Endothelial cell of umbilical vein (primary cell): ENCODE measurements at regions of chr2 and their contacts with region 1.

Region 1: DNA sequence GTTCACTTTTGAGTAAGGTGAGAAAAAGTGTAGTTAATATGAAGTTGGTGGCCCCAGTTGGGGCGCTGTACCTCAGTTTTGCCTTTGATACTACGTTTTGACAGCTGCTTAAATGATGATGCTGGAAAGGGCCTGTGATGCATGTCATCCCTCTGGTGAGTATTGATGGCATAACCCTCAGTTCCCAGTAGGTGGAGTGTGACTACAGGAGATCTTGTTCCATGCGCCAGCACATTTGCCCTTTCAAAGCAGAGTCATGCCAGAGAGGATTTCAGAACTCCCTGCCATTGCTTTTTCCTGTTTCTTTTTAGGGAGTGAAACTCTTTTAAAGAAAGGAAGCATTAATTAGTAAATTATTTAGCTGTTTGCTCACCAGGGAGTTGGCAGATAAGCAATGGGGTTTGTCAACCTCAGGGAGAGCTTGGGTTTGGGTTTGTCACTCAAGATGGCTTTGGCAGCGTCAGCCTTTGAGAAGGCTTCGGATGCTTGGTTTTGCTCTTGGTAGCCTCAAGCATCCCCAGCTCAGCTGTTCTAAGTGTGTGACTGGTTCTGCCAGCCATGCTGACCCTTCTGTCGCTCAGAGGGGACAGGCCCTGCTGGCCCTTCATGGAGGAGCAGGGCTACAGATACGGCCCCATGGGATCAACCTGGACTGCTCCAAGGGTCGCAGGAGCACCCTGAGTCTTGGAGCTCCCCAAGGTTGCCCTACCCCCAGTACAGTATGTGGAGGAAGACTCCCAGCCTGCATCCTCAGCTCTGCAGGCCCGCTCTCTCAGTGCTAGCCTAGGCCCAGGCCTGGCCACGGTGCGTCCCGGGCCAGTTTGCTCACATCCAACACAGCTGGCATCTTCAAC is 29.1 kb downstream of the ARMC9 start:
- DNase-seq: peak; percentile 68
- H3K4me3 ChIP-seq: no peak overlapping the region
- H3K27ac ChIP-seq: no peak overlapping the region
- H3K4me1 ChIP-seq: no peaks in the 10 kb centered on the region
- H3K27me3 ChIP-seq: no peaks in the 10 kb centered on the region
- CTCF ChIP-seq: peak; percentile 80 to 92
- POLR2A ChIP-seq: no peak

Region 2: GRCh38 chr2:231297108-231297908 is 69.8 kb after region 1 on chr2:
- CTCF ChIA-PET with region 1: interaction called, 13 read pairs
- POLR2A ChIA-PET with region 1: no interaction called
- dilution Hi-C with region 1: no loop called
- intact Hi-C with region 1: no loop called
- DNase-seq: peak; percentile 52
- H3K4me3 ChIP-seq: no peak overlapping the region
- H3K27ac ChIP-seq: no peak overlapping the region
- H3K4me1 ChIP-seq: peaks cover 18% of the 10 kb centered on the region
- H3K27me3 ChIP-seq: no peaks in the 10 kb centered on the region
- CTCF ChIP-seq: peak; percentile 63 to 88
- POLR2A ChIP-seq: no peak

Region 3: DNA sequence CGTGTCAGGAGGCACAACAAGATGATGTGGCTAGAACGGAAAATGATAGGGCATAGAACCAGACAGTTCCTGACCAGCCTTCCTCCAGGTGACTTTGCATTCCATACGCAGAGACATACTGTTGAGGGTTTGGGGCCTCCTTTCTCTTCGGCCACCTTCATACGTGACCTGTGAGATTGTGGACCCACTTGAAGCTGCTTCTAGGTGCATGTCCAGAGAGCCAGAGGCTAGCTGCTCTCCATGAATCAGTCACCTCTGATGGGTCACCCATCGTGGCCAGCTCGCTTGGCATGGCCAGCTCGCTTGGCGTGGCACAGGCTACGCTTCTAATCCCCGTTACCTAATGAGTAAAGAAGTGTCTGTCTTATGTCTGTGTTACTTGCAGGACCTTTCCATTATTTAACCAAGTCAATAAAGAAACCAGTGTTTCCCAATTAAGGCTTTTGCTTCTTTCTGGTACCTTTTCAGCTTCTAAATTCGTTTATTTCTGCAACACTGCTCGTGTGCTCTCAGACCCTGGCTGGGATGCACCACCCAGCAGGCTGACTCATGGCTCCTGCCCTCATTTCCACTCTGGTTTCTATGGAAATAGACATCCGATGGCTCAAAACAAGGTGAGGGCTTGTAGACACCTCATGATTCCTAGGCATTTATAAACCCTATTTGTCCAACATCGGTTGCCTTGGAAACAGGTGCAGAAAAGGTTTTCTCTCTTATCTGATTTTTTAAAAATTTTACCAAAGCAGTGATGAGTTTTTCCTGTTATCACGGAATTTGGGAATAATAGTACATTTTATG is 81.3 kb after region 1 on chr2:
- CTCF ChIA-PET with region 1: no interaction called
- POLR2A ChIA-PET with region 1: no interaction called
- dilution Hi-C with region 1: no loop called
- intact Hi-C with region 1: no loop called
- DNase-seq: no peak
- H3K4me3 ChIP-seq: no peak overlapping the region
- H3K27ac ChIP-seq: no peak overlapping the region
- H3K4me1 ChIP-seq: no peaks in the 10 kb centered on the region
- H3K27me3 ChIP-seq: no peaks in the 10 kb centered on the region
- CTCF ChIP-seq: no peak
- POLR2A ChIP-seq: no peak

Region 4: GRCh38 chr2:231399853-231400680 is 172.5 kb after region 1 on chr2:
- CTCF ChIA-PET with region 1: interaction called, 17 read pairs
- POLR2A ChIA-PET with region 1: no interaction called
- dilution Hi-C with region 1: no loop called
- intact Hi-C with region 1: loop called (anchors 1 kb)
- DNase-seq: peak; percentile 26
- H3K4me3 ChIP-seq: no peak overlapping the region
- H3K27ac ChIP-seq: no peak overlapping the region
- H3K4me1 ChIP-seq: no peaks in the 10 kb centered on the region
- H3K27me3 ChIP-seq: peaks cover 0 to 3% of the 10 kb centered on the region in 2 experiments
- CTCF ChIP-seq: peak in 1 of 2 donors; percentile 5
- POLR2A ChIP-seq: no peak

Region 5: DNA sequence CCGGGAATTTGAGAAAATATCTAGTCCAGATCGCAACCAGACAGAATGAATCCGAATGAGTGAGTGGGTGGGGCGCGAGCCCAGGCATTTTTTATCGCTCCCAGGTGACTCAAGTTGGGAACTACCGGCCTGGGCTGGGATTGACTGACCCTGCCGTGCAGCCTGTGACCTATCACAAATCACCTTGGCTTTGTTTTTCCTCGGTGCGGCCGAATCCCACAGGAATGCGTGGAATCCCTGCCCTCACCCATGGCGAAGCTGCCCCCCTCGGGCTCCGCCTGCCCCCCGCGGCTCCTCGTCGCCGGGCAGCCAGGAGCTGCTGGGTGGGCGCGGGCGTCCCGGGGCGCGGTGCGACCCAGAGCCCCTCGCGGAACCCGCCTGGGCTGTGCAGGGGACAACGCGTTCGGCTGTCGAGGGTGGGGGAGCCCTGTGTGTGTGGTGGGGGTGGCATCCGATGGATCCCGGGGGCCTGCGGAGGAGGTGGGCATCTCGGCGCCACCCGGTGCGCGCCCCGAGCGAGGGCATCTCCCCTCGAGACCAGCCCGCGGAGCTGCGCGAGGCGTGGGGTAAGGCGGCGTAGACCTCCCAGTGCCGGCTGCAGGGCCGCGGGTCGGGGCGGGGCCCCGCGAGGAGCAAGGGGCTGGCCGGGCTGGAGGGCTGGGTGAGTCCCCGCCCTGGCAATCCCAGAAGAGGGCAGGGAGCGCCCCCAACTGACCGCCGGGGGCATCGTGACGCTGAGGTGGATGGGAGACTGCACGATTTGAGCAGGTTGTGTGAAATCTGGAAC is 184.5 kb after region 1 on chr2:
- CTCF ChIA-PET with region 1: interaction called, 70 read pairs
- POLR2A ChIA-PET with region 1: no interaction called
- dilution Hi-C with region 1: no loop called
- intact Hi-C with region 1: loop called (anchors 1 kb)
- DNase-seq: peak; percentile 81
- H3K4me3 ChIP-seq: peak overlapping the region; percentile 18 to 73 (median 21)
- H3K27ac ChIP-seq: no peak overlapping the region
- H3K4me1 ChIP-seq: peaks cover 3% of the 10 kb centered on the region
- H3K27me3 ChIP-seq: no peaks in the 10 kb centered on the region
- CTCF ChIP-seq: peak; percentile 91 to 97
- POLR2A ChIP-seq: no peak

Region 6: GRCh38 chr2:231418820-231419640 is 191.5 kb after region 1 on chr2:
- CTCF ChIA-PET with region 1: interaction called, 70 read pairs
- POLR2A ChIA-PET with region 1: no interaction called
- dilution Hi-C with region 1: no loop called
- intact Hi-C with region 1: no loop called
- DNase-seq: no peak
- H3K4me3 ChIP-seq: no peak overlapping the region
- H3K27ac ChIP-seq: no peak overlapping the region
- H3K4me1 ChIP-seq: no peaks in the 10 kb centered on the region
- H3K27me3 ChIP-seq: no peaks in the 10 kb centered on the region
- CTCF ChIP-seq: no peak
- POLR2A ChIP-seq: no peak